Activated T-helper 2 cell treated with anti-CD3 and anti-CD28 coated beads, Interferon-gamma antibody, Interleukin-2, Interleukin-4, amounts not matched to agents 10 μg/mL and 5 μg/mL and 100 μg/mL, durations not matched to agents 14 hours and 24 hours and 36 hours (primary cell): ENCODE measurements at regions of chr19 and their contacts with region 1.

Region 1: GRCh38 chr19:1026189-1027019 is at the start of gene CNN2:
- DNase-seq: peak; percentile 72
- H3K4me3 Mint-ChIP-seq: peak within 1 kb of the TSS; percentile 93
- H3K27ac Mint-ChIP-seq: peak within 1 kb of the TSS; percentile 83
- H3K4me1 Mint-ChIP-seq: peaks cover 20% of the 10 kb centered on the region
- H3K27me3 Mint-ChIP-seq: no peaks in the 10 kb centered on the region
- total RNA-seq, gene CNN2: 160 and 163 TPM in 2 replicates

Region 2: DNA sequence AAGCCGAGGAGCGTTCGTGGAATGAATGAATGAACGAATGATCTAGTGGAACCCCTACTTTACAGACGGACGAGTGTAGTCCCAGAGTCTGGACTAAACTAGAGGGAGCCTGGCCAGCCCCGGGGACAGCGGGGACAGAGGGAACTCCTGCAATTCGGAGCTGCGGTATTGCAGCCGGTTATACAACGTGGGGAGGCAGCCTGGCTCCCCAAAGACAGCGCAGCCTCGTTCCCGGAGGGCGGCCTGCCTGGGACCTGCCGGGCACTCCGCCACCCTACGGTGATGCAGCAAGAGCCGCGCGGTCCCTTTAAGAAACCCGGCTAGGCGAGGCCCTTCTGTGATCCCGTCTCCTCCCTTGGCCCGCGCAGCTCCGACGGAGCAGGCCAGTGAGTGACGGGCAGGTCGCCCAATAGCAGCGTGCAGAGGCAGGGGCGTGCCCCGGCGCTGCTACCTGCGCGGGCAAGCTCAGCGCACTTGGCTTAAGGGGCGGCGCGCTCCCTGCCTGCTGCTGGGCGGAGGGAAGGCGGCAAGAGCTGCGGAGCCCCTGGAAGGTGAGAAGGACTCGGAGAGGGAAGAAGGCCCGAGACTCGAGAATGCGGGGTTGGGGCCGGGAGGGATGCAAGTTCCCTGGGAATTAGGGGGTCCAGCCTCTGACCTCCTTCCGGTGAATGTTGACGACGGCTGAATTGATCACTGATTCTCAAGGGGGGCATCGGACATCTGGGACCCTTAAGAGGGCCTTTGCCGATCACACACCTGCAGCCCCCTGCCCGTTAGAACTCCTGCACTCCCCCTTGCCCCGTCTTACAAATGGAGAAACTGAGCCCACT is 13.5 kb after region 1 on chr19 and contains the start of gene ABCA7:
- intact Hi-C with region 1: loop called (anchors 1 kb)
- DNase-seq: peak; percentile 99
- H3K4me3 Mint-ChIP-seq: peak within 1 kb of the TSS; percentile 96
- H3K27ac Mint-ChIP-seq: peak within 1 kb of the TSS; percentile 68
- H3K4me1 Mint-ChIP-seq: peaks cover 36% of the 10 kb centered on the region
- H3K27me3 Mint-ChIP-seq: no peaks in the 10 kb centered on the region
- total RNA-seq, gene ABCA7: 17.2 and 19.6 TPM in 2 replicates

Region 3: DNA sequence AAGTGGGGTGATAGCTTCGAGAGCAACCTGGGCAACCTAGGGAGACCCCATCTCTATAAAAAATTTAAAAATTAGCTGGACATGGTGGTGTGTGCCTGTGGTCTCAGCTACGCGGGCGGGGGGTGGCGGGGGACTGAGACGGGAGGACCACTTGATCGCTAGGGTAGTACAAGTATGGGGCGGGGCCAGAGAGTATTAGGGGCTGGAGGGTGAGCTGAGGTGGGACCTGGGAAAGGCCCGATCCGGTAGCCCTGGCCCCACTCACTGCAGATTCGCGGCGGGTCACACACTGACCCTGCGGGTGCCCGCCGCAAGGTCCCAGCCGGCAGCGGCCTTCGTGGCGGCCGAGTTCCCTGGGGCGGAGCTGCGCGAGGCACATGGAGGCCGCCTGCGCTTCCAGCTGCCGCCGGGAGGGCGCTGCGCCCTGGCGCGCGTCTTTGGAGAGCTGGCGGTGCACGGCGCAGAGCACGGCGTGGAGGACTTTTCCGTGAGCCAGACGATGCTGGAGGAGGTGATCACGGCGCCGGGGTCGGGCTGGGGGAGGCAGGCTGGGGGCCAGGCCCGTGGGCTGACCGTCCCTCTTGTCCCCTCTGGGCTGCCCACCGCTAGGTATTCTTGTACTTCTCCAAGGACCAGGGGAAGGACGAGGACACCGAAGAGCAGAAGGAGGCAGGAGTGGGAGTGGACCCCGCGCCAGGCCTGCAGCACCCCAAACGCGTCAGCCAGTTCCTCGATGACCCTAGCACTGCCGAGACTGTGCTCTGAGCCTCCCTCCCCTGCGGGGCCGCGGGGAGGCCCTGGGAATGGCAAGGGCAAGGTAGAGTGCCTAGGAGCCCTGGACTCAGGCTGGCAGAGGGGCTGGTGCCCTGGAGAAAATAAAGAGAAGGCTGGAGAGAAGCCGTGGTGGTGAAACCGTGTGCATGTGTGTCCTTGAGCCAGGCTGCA is 38.5 kb after region 1 on chr19:
- intact Hi-C with region 1: loop called (anchors 5 kb)
- DNase-seq: peak; percentile 72
- H3K4me3 Mint-ChIP-seq: peak overlapping the region; percentile 13
- H3K27ac Mint-ChIP-seq: peak overlapping the region; percentile 60
- H3K4me1 Mint-ChIP-seq: peaks cover 20% of the 10 kb centered on the region
- H3K27me3 Mint-ChIP-seq: no peaks in the 10 kb centered on the region

Region 4: DNA sequence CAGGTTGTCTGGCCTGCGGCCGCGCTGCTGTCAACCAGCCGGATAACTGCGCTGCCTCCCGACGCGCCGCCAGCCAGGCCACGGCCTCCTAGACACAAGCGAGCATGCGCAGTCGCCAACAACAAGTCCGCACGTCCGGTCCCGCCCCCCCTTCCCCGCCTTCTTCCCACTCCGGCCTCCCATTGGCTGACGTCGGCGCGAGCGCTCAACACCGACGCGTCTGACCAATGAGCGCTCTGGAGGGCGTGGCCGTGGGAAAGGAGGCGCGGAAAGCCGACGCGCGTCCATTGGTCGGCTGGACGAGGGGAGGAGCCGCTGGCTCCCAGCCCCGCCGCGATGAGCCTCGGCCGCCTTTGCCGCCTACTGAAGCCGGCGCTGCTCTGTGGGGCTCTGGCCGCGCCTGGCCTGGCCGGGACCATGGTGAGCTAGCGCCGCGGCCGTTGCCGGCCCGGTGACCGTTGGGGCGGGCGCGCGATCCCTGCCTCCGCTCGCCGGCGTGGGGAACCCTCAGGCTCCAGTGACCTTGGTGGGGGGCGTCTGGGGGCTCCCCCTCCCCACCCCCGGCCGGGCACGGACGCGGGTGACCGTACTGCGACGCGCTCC is 77.4 kb after region 1 on chr19 and contains the start of gene GPX4:
- intact Hi-C with region 1: loop called (anchors 2 kb)
- DNase-seq: peak; percentile 96
- H3K4me3 Mint-ChIP-seq: peak within 1 kb of the TSS; percentile 73
- H3K27ac Mint-ChIP-seq: peak within 1 kb of the TSS; percentile 93
- H3K4me1 Mint-ChIP-seq: peaks cover 32% of the 10 kb centered on the region
- H3K27me3 Mint-ChIP-seq: no peaks in the 10 kb centered on the region
- total RNA-seq, gene GPX4: 257 TPM in 2 replicates

Region 5: GRCh38 chr19:1189419-1189818 is 163.0 kb after region 1 on chr19:
- intact Hi-C with region 1: loop called (anchors 5 kb)
- DNase-seq: peak; percentile 25
- H3K4me3 Mint-ChIP-seq: no peak overlapping the region
- H3K27ac Mint-ChIP-seq: peak overlapping the region; percentile 51
- H3K4me1 Mint-ChIP-seq: peaks cover 16% of the 10 kb centered on the region
- H3K27me3 Mint-ChIP-seq: no peaks in the 10 kb centered on the region

Region 6: DNA sequence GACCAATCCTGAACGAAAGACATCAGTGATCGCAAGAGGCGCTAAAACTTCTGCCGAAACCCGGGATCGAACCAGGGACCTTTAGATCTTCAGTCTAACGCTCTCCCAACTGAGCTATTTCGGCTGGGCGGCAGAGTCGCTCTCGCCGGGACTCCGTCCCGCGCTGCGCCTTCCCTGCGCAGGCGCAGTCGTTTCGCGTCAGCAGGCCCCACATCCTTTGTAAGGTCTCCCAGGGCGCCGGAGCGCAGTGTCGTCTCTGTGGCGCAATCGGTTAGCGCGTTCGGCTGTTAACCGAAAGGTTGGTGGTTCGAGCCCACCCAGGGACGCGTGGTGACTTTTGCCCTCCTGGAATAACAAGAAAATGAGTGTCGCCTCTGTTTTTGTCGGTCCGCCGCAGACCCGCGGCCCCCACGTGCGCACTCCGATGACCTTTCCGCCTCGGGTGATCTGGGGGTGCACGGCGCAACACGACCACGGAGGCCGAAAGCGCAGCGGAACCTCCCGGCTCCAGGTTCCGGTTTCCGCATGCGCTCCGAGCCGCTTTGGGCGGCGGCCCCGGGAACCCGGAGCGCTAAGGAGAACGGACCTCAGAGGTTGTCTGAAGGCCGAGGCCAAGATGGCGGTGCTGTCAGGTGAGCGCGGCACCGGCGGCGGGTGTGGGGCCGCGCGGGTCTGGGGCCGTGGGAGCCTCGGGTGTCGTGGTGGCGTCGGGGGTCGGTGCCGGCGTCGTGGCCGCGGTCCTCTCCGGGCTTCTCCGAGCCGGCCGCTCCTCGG is 357.1 kb after region 1 on chr19 and contains the start of gene NDUFS7:
- intact Hi-C with region 1: no loop called
- DNase-seq: peak; percentile 89
- H3K4me3 Mint-ChIP-seq: peak within 1 kb of the TSS; percentile 87
- H3K27ac Mint-ChIP-seq: peak within 1 kb of the TSS; percentile 91
- H3K4me1 Mint-ChIP-seq: peaks cover 10% of the 10 kb centered on the region
- H3K27me3 Mint-ChIP-seq: no peaks in the 10 kb centered on the region
- total RNA-seq, gene NDUFS7: 88.7 and 104 TPM in 2 replicates